Aorta (tissue), 5 donors: ENCODE measurements at regions of chr19 and their contacts with region 1.

Region 1: DNA sequence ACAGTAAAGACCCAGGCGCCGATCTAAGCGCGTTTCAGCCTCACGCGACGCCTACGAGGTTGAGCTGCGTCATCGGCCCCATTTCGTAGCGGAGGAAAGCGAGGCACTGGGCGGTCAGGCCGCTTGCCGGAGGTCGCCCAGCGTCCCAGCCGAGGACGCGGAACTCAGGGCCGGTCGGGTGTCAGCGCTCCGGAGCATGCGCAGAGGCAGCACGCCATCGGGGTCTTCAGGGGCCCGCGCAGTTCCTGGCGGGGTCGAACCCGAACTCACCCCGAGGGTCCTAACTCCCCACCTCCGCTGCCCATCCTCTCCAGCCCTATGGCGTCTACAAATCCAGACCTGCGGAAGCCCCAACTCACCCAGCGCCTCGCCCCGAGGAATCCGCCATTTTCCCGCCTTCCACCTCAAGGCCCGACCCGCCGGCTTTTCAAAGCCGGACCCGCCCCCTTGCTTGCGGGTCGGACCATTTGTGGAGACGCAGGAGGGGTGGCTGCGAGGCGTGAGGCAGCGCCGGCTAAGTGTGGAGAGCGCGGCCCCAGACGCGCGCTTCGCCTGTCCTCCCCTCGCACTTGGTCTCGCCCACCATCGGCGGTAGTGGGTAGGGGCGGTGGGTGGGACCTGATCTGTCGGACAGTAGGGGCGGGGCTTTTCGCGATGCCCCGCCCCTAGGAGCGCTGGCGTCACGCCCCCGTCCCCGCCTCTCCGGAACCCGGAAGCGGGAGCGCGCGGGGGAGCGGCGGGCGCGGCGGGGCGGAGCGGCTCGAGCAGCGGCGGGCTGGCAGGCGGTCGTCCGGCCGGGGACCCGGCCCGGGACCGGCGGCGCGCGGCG is at the starts of genes HAUS8 and MYO9B:
- DNase-seq: peak; percentile 100
- ATAC-seq: peak; percentile 99
- H3K4me3 ChIP-seq: peak within 1 kb of the TSS; percentile 61 to 65
- H3K27ac ChIP-seq: peak within 1 kb of the TSS in 1 of 2 donors; percentile 79
- H3K4me1 ChIP-seq: peaks cover 3 to 4% of the 10 kb centered on the region in 2 donors
- H3K27me3 ChIP-seq: no peaks in the 10 kb centered on the region
- total RNA-seq, gene HAUS8: 5.8 to 7.2 TPM
- total RNA-seq, gene MYO9B: 165 to 176 TPM

Region 2: GRCh38 chr19:16938211-16938610 is 137.0 kb before region 1 on chr19:
- intact Hi-C with region 1: no loop called
- DNase-seq: no peak
- ATAC-seq: no peak
- H3K4me3 ChIP-seq: no peak overlapping the region
- H3K27ac ChIP-seq: no peak overlapping the region
- H3K4me1 ChIP-seq: no peaks in the 10 kb centered on the region
- H3K27me3 ChIP-seq: no peaks in the 10 kb centered on the region

Region 3: GRCh38 chr19:17125715-17126677 is 50.7 kb after region 1 on chr19:
- intact Hi-C with region 1: loop called in 1 of 2 experiments (anchors 5 kb)
- DNase-seq: peak; percentile 90 to 91
- ATAC-seq: peak; percentile 82
- H3K4me3 ChIP-seq: no peak overlapping the region
- H3K27ac ChIP-seq: peak overlapping the region; percentile 32 to 79
- H3K4me1 ChIP-seq: no peaks in the 10 kb centered on the region
- H3K27me3 ChIP-seq: no peaks in the 10 kb centered on the region

Region 4: DNA sequence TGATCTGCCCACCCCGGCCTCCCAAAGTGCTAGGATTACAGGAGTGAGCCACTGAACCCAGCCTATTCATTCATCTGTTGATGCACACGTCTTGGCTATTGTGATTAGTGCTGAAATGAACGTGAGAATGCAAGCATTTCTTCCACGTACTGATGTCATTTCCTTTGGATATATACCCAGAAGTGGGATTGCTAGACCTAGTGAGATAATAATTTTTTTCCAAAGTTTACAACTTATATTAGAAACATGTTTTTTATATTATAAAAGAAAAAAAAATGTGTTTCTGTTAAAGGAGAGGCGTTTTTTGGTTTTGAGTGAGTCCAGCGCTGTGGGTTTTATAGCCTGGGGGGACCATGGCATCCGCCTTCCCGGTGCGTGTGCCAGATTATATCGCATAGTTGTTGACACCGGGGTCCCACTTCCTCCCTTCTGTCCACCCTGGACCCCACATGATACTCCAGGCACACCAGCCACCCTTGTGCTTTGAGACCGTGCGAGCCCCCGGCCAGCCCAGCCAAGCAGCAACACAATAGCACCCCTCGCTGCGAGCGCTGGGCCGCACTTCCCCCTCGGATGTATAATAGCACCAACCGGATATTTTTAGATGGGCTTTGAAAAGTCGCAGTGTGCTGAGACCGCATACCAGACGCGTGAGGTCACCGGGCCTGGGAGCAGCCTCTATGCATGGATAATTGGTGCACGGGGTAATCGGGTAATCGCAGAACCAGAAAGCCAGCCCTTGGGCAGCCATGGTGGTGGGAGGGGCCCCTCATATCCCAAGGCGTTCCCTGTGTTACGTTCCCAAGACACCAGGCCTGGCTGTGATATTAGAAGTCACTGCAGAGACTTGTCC is 60.0 kb after region 1 on chr19:
- intact Hi-C with region 1: loop called in 1 of 2 experiments (anchors 5 kb)
- DNase-seq: peak; percentile 98 to 99
- ATAC-seq: peak; percentile 95
- H3K4me3 ChIP-seq: no peak overlapping the region
- H3K27ac ChIP-seq: peak overlapping the region; percentile 94 to 95
- H3K4me1 ChIP-seq: peaks cover 0 to 3% of the 10 kb centered on the region in 2 donors
- H3K27me3 ChIP-seq: no peaks in the 10 kb centered on the region

Region 5: DNA sequence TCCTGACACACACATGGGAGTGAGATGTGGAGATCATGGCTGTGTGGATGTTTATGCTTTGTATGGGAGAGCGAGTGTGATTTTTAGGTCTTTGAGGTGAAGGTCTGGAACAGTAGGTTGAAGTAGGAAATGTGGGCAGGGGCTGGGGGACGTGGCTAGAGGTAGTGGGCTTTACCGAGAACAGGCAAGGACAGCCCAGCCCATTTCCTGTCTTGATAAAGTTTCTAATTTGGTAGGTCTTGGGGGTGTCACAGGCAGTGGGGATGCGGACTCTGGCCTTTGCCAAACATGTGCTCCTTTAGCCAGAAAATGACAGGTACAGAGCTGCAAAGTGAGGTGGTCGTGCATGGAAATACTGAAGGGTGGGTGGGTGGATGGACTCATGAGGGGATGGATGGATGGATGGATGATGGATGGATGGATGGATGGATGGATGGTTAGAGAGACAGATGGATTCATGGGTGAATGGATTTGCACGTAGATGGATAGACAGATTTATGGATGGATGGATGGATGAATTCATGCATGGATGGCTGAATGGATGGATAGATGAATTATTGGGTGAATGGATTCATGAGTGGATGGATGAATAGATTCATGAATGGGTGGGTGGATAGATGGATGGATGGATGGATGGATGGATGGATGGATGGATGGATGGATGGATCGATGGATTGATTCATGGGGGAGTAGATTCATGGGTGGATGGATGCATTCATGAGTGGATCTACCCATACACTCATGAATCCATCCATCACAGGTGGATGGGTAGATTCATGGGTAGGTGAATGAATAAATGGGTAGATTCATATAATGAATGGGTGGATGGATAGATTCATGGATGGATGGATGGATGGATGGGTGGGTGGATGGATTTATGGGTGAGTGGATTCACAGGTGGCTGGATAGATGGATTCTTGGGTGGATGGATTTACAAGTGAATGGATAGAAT is 70.6 kb after region 1 on chr19:
- intact Hi-C with region 1: loop called (anchors 2 to 5 kb)
- DNase-seq: no peak
- ATAC-seq: no peak
- H3K4me3 ChIP-seq: no peak overlapping the region
- H3K27ac ChIP-seq: peak overlapping the region in 1 of 2 donors; percentile 92
- H3K4me1 ChIP-seq: peaks cover 0 to 3% of the 10 kb centered on the region in 2 donors
- H3K27me3 ChIP-seq: no peaks in the 10 kb centered on the region

Region 6: DNA sequence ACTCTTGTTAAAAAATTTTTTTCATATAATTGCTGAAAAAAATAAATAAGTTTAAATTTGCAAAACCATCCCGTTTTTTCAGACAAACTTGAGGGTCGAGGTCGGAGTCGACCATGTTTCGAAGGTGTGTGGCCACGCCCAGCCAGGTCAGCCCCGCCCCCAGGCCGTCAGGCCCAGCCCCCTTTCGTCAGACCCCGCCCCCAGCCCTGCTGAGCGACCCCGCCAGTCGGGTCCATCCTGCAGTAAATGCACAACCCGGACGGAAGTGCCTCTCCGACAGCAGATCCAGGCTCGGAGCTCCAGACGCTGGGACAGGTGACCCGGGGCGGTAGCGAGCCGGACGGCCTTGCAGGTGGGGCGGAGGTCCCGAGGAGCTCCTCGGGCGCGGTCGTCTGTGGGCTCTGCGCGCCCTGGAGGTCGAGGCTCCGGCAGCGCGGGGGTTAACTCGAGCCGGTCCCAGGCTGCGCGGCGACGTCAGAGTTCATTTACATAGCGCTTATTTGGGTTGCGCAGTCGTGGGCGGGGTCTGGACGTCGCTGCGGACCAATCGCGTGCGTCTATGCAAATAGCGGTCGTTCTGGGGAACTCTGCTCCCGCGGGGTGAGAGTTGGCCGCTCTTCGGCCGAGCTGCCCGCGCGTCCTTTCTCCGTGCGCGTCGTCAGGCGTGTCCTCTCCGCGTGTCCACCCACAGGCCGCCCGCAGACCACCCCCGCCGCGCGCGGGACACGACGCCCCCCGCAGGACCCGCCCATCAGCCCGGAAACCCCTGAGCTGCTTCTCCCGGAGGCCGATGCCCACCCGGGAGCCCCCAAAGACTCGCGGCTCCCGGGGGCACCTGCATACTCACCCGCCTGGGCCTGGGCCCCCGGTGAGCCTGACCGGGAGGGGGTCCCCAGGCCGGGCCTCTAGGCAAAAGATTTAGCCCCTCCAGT is 151.0 kb after region 1 on chr19 and contains the start of gene OCEL1:
- intact Hi-C with region 1: loop called in 1 of 2 experiments (anchors 5 kb)
- DNase-seq: peak; percentile 99
- ATAC-seq: peak; percentile 98
- H3K4me3 ChIP-seq: peak within 1 kb of the TSS; percentile 3 to 40
- H3K27ac ChIP-seq: peak within 1 kb of the TSS in 1 of 2 donors; percentile 43
- H3K4me1 ChIP-seq: no peaks in the 10 kb centered on the region
- H3K27me3 ChIP-seq: no peaks in the 10 kb centered on the region
- total RNA-seq, gene OCEL1: 10.2 to 23.0 TPM

Region 7: DNA sequence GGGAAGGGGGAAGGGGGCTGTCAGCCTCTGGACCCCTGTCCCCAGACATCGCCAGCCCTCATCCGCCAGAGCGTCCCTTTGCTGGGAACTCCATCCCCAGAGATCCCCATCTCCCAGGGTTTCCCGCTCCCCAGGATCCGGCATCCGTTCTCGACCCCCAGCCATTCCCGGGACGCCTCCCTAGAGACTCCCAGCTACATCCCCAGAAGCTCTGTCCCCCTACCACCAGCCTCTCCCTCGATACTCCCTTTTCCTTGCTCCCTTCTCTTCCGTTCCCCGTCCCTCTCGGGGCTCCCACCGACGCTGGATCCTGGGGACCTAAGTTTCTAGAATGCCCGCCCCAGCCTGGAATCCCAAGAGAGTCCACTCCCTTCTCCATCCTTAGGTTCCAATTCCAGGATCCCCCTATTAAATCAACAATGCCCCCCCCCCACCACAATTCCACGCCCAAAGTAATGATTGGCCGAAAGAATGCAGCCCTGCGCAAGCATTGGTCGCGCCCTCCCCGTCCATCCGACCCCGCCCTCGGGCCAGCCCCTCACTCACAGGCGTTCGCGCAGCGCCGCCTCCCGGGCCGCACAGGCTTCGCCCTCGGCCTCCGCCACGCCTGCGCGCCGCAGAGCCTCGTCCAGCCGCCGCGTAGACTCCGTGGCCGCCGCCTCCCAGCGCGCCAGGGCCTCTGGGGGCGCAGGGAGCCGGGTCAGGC is 315.6 kb after region 1 on chr19:
- intact Hi-C with region 1: loop called in 1 of 2 experiments (anchors 10 kb)
- DNase-seq: peak; percentile 96 to 98
- ATAC-seq: peak; percentile 97
- H3K4me3 ChIP-seq: peak overlapping the region; percentile 27 to 58
- H3K27ac ChIP-seq: no peak overlapping the region
- H3K4me1 ChIP-seq: no peaks in the 10 kb centered on the region
- H3K27me3 ChIP-seq: no peaks in the 10 kb centered on the region